Left cardiac atrium (tissue), 4 donors: ENCODE measurements at regions of chr17 and their contacts with region 1.

Region 1: DNA sequence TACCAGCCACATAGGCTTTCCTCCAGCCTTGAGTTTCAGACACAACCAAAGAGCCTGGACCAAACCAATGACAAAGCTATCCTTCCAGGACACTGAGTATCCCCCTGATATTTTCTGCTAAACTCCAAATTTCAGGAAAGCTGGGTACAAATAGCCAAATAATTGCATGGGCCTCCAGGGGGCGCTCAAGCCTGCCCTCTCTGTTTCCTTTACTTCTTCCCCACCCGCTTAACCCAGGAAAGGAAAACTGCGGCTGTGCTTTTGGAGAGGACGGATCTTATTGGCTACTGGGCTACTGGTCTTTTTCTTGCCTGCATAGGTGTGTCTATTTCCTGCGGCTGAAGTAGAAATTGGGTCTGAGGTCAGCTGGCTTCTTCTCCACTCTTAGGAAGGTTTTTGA is 30.1 kb downstream of the GNGT2 start:
- DNase-seq: peak; percentile 68
- ATAC-seq: peak; percentile 30 to 63

Region 2: DNA sequence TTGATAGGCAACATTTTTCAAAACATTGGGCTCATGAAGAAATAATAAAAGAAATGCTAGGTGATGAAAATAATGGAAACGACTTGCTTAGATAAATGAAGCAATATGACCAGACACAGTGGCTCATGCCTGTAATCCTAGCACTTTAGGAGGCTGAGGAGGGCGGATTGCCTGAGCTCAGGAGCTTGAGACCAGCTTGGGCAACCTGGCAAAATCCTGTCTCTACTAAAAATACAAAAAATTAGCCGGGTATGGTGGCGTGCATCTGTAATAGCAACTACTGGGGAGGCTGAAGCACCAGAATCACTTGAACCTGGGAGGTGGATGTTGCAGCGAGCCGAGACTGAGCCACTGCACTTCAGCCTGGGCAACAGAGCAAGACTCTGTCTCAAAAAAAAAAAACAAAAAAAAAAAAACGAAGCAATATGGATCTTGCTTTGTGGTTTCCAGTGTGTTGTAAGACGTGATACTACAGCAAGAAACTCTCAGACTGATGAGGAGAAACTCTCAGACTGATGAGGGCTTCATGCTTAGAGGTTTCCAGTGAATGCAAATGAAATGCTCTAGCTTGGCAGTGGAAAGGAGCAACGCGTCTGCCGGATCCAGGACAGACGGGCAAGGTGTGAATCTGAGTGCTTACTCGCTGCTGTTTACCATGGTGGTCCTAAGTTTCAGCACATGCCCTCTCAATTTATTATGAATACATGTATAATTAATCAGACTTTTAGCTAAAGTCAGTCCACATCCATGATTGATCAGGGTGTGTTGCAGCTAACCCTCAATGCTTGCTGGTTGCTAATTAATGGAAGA is 194.7 kb before region 1 on chr17:
- intact Hi-C with region 1: no loop called
- DNase-seq: no peak
- ATAC-seq: no peak

Region 3: GRCh38 chr17:49217651-49218413 is 37.5 kb after region 1 on chr17:
- intact Hi-C with region 1: no loop called
- DNase-seq: peak; percentile 57
- ATAC-seq: peak; percentile 75 to 77

Region 4: GRCh38 chr17:49290690-49291359 is 110.5 kb after region 1 on chr17:
- intact Hi-C with region 1: loop called in 1 of 2 experiments (anchors 10 kb)
- DNase-seq: no peak
- ATAC-seq: peak in 1 of 2 donors; percentile 38